Dendritic cell treated with granulocyte-macrophage colony-stimulating factor and Interleukin-4, amounts not matched to agents 40 ng/mL and 50 ng/mL, for 4 days (primary cell): ENCODE measurements at regions of chr5 and their contacts with region 1.

Region 1: DNA sequence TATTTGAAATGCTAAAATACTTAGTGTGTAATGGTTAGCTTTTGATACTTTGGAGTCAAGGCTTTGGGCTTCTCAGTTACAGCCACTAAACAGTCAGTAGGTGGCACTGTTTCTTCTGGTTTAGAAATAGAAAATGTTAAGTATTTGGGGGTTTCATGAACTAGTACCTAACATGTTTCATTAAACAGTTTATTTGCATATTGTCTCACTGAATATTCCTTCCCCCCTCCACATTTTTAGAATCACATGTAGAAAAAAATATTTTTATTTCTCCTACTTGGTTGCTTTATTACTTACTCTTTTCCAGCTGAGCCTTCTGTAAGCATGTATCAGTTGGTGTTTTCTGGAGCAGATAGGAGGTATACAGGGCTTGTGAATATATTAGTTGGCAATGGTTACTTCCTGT is 48.0 kb downstream of the IPO11 start:
- H3K4me3 Mint-ChIP-seq: no peak overlapping the region
- H3K27ac Mint-ChIP-seq: no peak overlapping the region
- H3K4me1 Mint-ChIP-seq: no peaks in the 10 kb centered on the region
- H3K27me3 Mint-ChIP-seq: no peaks in the 10 kb centered on the region

Region 2: DNA sequence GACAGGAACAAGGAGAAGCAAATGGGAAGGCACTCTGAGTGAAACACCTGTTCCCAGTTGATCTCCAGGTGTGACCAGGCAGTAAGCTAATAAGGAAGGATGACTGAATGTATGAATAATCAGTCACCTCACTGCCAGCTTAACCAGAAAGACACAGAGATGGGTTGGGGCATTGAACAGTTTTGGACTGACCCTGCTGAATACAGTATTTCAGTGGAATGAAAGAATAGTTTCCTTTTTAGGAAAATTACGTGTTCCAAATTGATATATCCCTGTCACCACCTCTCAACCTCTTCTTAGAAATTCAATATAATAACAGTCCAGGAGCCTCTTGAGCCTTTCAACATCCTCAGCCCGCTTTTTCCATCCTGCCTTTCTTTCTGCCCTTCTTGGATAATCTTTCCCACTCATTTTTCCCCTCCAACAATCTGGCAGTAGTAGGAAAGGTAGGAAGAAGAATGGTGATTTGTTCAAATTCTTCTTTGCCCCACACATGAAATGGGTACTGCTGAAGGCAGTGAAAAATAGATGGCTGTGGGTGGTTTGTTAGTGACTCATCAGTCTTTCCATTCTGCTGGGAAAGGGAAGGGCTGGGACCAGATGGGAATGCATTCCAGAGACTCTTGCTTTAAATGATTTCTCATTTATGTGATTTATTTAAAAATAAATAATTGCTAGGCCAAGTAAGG is 1010.6 kb before region 1 on chr5:
- intact Hi-C with region 1: no loop called
- H3K4me3 Mint-ChIP-seq: no peak overlapping the region
- H3K27ac Mint-ChIP-seq: no peak overlapping the region
- H3K4me1 Mint-ChIP-seq: peaks cover 20% of the 10 kb centered on the region
- H3K27me3 Mint-ChIP-seq: no peaks in the 10 kb centered on the region

Region 3: DNA sequence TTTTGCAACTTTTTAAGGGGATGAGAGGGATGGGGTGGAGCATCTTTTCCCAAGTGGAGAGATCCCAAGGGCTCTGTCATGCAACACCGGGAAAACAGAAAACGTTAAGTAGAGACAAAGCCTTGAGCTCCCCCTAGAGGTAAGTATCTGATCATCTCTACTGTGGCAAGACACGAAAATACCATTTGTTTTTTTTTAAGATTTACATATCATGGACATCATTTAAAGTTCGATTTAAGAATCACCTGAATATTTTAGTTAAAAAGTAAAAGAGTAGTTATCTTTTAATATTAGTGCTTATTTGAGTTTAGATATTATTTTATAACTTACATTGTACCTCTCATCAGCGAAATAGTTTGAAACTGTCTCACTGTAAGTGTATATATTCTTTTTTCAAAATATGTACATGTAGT is 318.4 kb after region 1 on chr5:
- intact Hi-C with region 1: loop called (anchors 1 kb)
- H3K4me3 Mint-ChIP-seq: no peak overlapping the region
- H3K27ac Mint-ChIP-seq: no peak overlapping the region
- H3K4me1 Mint-ChIP-seq: peaks cover 7% of the 10 kb centered on the region
- H3K27me3 Mint-ChIP-seq: no peaks in the 10 kb centered on the region